ENCODE measurements at regions of chr10 and their contacts with region 1.

Region 1: GRCh38 chr10:114304017-114304570 is 65.0 kb downstream of the VWA2 start:
- DNase-seq: peak; percentile 85
- ATAC-seq: peak; percentile 59
- H3K4me3 Mint-ChIP-seq: peak overlapping the region; percentile 87
- H3K27ac Mint-ChIP-seq: peak overlapping the region; percentile 69
- H3K4me1 Mint-ChIP-seq: peaks cover 13% of the 10 kb centered on the region
- H3K27me3 Mint-ChIP-seq: no peaks in the 10 kb centered on the region

Region 2: DNA sequence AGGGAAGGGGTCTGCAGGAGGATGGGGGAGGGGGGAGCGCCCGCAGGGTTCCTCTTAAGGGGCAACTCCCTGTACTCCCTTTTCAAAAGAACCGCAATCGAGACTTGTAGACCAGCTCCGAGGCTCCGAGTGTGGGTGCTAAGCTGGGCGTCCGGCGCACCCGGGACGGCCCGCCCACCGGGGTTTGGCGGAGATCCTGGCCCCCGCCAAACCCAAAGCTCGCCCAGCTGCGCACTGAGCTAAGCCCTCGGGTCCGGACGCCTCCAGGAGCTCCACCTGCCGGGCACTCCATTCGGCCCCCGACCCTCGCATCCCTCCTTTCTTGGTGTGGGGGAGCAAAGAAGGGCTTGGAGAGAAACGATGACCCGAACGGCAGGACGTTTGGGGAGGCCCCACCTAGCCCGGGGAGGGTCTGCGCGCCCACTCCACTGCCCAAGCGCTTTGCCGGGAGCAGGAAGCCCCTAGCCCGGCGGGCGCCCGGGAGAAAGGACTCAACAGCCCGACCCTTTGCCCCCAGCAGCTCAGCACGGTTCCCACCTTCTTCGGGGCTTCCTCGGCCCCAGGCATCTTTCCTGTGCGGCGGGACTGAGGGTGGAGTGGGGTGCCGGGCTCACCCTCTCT is 99.6 kb after region 1 on chr10:
- CTCF ChIA-PET with region 1: interaction called, 21 read pairs
- POLR2A ChIA-PET with region 1: no interaction called
- DNase-seq: no peak
- ATAC-seq: peak; percentile 53
- H3K4me3 Mint-ChIP-seq: peak overlapping the region; percentile 55
- H3K27ac Mint-ChIP-seq: no peak overlapping the region
- H3K4me1 Mint-ChIP-seq: peaks cover 8% of the 10 kb centered on the region
- H3K27me3 Mint-ChIP-seq: peaks cover 57% of the 10 kb centered on the region

Region 3: GRCh38 chr10:114458955-114459354 is 154.9 kb after region 1 on chr10:
- CTCF ChIA-PET with region 1: interaction called, 64 read pairs
- POLR2A ChIA-PET with region 1: interaction called, 5 read pairs
- DNase-seq: peak; percentile 44
- ATAC-seq: peak; percentile 61
- H3K4me3 Mint-ChIP-seq: no peak overlapping the region
- H3K27ac Mint-ChIP-seq: no peak overlapping the region
- H3K4me1 Mint-ChIP-seq: peaks cover 10% of the 10 kb centered on the region
- H3K27me3 Mint-ChIP-seq: no peaks in the 10 kb centered on the region

Region 4: DNA sequence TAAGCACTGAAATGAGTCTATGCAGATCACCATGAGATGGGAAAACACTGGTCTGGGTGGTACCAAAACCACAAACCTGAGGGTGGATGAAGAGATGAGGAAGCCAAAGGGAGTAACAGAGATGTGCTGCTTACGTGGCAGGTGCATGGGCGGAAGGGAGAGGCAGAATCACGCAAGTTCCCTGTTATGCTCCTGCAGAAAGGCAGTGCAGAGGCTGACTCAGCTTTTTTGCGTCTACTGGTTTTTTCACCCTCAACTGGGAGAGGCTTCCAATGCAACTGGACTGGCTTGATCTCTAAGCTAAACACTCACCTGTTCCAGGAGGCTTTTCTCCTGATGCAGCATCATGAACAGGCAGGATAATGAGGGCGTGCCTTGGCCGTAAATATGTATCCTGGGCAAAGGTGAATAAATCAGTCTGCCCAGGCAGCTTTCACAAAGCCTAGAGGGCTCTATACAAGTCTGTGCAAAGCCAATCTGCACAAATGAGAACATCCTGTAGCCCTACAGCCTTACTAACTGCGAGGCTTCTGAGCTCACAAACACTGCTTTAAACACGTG is 195.6 kb after region 1 on chr10:
- CTCF ChIA-PET with region 1: interaction called, 16 read pairs
- POLR2A ChIA-PET with region 1: no interaction called
- DNase-seq: peak; percentile 64
- ATAC-seq: peak; percentile 66
- H3K4me3 Mint-ChIP-seq: peak overlapping the region; percentile 56
- H3K27ac Mint-ChIP-seq: peak overlapping the region; percentile 89
- H3K4me1 Mint-ChIP-seq: peaks cover 80% of the 10 kb centered on the region
- H3K27me3 Mint-ChIP-seq: no peaks in the 10 kb centered on the region

Region 5: GRCh38 chr10:114550756-114551635 is 246.9 kb after region 1 on chr10:
- CTCF ChIA-PET with region 1: interaction called, 74 read pairs
- POLR2A ChIA-PET with region 1: no interaction called
- DNase-seq: no peak
- ATAC-seq: no peak
- H3K4me3 Mint-ChIP-seq: no peak overlapping the region
- H3K27ac Mint-ChIP-seq: no peak overlapping the region
- H3K4me1 Mint-ChIP-seq: peaks cover 28% of the 10 kb centered on the region
- H3K27me3 Mint-ChIP-seq: no peaks in the 10 kb centered on the region